GM23248 (cell line): ENCODE measurements at regions of chr6 and their contacts with region 1.

Region 1: DNA sequence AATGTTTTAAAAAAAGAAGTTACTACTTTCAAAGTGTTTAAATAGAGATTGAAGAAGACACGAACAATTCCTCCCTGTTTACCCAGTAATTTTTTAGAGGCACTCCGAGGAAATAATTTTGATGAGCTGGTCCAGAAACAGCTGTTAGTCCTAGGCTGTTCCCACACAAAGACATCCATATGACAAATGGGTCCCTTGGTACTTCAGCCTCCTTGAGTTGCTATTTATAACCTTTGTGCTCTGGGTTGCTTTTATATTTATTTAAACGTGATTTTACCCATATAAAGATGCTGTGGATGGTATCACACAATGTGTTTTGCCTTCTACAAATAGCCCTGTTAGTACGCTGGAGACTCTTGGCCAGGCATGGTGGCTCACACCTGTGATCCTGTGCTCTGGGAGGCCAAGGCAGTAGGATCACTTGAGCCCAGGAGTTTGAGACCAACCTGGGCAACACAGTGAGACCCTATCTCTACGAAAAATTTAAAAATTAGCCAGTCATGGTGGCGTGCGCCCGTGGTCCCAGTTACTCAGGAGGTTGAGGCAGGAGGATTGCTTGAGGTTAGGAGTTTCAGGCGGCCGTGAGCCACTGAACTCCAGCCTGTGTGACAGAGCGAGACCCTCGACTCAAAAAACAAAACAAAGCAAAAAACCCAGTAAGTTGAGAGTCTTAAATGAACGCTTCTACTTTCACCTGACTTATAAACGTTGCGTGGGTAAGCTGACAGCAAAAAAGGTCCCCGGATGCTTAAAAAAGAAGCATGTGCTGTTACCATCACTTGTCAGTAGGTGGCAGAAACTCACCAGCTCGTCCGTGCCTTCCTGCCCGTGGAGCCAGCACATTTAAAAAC is 56.9 kb upstream of the ARMH2 start:
- DNase-seq: peak; percentile 86
- H3K4me3 ChIP-seq: no peak overlapping the region
- H3K27ac ChIP-seq: no peak overlapping the region
- H3K4me1 ChIP-seq: peaks cover 14% of the 10 kb centered on the region
- H3K27me3 ChIP-seq: no peaks in the 10 kb centered on the region

Region 2: GRCh38 chr6:25027221-25027916 is 171.7 kb after region 1 on chr6:
- in situ Hi-C with region 1: no loop called
- DNase-seq: no peak
- H3K4me3 ChIP-seq: no peak overlapping the region
- H3K27ac ChIP-seq: no peak overlapping the region
- H3K4me1 ChIP-seq: no peaks in the 10 kb centered on the region
- H3K27me3 ChIP-seq: no peaks in the 10 kb centered on the region; the same call in 1 of the 2 replicates

Region 3: DNA sequence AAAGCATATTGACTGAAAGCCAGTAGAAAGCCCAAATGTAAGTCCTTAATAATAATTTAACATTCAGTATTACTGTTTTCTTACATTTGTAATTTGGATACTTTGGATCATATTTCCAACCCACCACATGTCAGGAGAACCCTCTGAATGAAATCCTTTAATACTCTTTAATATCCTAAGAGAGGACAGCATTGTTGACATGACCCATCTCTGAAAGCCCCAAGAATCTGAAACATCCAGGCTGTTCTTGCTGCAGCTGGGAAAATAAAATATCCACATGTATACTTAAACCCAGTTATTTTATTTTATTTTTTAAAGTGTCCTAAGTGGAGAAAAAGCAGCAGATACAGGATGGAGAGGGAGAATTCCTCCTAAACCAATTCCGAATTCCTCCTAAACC is 211.0 kb after region 1 on chr6:
- in situ Hi-C with region 1: loop called (anchors 5 kb)
- DNase-seq: no peak
- H3K4me3 ChIP-seq: no peak overlapping the region
- H3K27ac ChIP-seq: no peak overlapping the region
- H3K4me1 ChIP-seq: peaks cover 6% of the 10 kb centered on the region
- H3K27me3 ChIP-seq: no peaks in the 10 kb centered on the region

Region 4: DNA sequence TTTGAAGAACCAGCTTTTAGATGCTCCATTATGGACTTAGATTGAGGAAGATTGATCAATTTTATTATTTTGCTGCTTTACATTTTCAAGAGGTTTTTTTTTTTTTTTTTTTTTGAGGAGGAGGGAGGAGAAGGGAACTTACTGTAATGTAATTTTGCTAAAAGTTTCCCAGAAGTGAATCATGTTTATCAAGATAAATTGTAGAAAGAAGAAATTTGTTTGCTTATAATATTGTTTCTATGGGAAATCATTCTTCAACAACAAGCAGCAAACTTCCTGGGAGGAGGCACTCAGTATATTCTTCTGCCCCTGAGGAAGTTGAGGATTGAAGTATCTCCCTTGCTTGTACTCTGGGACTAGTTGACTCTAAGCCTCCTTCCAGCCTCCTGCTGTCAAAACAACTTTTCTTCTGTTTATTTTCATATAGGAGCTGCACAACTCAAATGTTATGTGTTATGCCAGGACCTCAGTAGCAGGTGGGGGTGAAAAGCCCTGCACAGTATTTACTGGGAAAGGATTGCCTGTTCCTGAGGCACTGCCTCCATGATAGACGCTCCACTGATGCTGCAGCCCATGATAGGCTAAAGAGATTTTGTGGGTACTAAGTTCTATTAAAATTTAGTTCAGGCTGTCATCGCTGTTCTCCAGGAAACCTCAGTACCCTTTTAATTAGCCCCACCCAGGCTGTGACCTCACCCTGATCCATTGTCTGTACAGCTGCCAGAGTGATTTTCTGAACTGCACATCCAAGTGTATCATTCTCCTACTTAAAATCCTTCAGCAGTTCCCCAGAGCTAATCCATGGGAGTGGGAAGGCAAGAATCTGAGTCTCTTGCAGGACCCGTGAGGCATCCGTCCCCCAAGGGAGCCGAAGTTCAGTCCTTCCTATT is 475.4 kb after region 1 on chr6:
- in situ Hi-C with region 1: no loop called
- DNase-seq: peak; percentile 60
- H3K4me3 ChIP-seq: peak overlapping the region; percentile 9; the same call in 1 of the 2 replicates
- H3K27ac ChIP-seq: no peak overlapping the region
- H3K4me1 ChIP-seq: peaks cover 19% of the 10 kb centered on the region
- H3K27me3 ChIP-seq: no peaks in the 10 kb centered on the region

Region 5: DNA sequence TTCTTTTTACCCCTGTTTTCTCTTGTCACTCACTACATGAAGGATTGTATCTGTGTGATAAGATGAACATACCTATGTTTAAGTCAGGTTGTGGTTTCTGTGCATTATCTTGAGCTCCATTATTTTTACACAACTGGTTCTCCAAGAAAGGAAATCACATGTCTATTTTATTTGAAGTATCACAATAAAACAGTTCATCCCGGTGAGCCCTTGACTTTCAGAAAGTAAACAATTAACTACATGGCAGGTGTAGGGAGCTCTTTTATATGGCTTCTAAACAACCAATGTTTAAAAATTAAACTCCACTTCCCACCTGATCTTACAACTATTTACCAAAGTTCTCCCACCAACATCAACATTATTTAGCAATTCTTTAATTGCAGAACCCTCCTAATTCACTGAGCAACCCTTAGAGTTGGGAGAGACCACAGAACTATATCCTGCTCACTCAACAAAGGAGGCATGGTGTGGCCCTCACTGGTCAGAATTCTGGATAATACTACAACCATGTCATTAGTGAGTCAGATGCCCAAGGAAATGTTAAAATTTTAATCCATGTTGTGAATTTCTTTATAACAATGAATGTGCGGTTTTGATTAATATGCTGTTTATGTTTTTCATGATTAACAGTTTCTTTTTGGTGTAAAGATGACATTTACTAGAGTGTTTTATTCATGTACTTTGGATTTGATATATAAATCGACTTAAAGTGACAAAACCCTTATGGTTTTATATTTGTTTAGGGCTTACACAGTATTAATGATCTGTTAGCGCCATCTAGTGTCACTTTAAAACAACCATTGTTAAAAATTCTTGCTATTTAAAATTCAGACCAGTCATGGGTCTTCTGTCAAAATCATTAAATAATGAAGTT is 746.4 kb after region 1 on chr6:
- in situ Hi-C with region 1: loop called (anchors 25 kb)
- DNase-seq: peak; percentile 77
- H3K4me3 ChIP-seq: no peak overlapping the region
- H3K27ac ChIP-seq: no peak overlapping the region
- H3K4me1 ChIP-seq: no peaks in the 10 kb centered on the region
- H3K27me3 ChIP-seq: no peaks in the 10 kb centered on the region